Heart right ventricle (tissue), 16 donors: ENCODE measurements at regions of chr2 and their contacts with region 1.

Region 1: DNA sequence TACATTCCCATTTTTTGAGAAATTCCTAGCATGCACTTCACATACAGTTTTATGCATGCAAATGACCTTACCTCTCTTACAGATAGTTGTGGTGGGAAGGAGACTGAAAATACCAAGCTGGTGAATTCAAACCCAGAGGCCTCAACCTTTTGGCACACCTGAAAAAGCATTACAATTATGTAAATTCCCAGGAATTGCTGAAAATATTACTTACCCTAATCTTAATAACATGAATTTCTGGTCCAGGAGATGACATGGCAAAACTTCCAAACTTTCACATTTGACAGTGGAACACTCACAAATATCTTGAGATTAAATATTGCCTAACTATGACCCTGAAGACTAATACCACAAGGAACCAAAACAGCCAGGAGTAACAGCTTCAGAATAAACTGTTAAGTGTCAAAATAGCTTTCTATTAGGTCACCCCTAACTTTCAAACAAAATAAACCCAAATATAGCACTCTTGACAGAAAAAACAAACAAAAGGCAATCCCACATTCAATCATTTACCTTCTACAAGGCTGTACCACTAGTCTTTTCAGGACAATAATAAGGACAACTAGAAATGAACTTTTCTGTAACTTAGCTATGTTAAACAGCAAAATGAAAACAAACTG is 10.9 kb upstream of the PEX13 start:
- DNase-seq: no peak
- ATAC-seq: no peak
- H3K4me3 ChIP-seq: no peak overlapping the region
- H3K27ac ChIP-seq: no peak overlapping the region
- H3K4me1 ChIP-seq: peaks cover 0 to 4% (median 0%) of the 10 kb centered on the region in 9 donors
- H3K27me3 ChIP-seq: no peaks in the 10 kb centered on the region
- CTCF ChIP-seq: no peak

Region 2: DNA sequence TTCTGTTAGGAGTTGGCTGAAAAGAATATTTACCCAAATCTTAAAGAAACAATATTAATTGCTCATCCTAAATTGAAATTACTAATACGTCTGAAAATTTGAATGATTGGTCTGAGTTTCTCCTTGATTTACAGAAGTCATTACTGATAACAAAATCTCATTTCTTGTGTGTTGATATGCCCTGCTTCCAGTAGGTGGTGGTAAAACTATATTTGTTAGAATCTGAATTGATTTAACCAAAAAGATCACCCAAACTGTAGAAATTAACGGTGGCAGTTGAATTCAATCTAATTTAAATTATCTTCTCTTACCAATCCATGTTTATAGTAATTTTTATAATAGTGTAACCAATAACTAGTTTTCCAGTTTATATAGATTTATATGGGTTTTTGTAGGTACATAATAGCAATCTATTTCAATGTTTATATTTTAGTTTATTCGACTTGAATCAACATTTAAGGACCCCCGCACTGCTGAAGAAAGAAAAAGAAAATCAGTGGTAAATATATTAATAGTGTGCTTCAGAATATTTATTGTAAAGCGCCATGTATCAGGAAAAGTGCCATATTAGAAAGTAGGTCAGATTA is 212.2 kb before region 1 on chr2:
- intact Hi-C with region 1: loop called in 3 of 10 experiments (anchors 5 to 10 kb)
- DNase-seq: no peak
- ATAC-seq: no peak
- H3K4me3 ChIP-seq: no peak overlapping the region
- H3K27ac ChIP-seq: peak overlapping the region in 1 of 10 donors; percentile 87
- H3K4me1 ChIP-seq: peaks cover 0 to 24% (median 0%) of the 10 kb centered on the region in 9 donors
- H3K27me3 ChIP-seq: no peaks in the 10 kb centered on the region
- CTCF ChIP-seq: peak in 7 of 9 donors; percentile 34 to 63 (median 53)

Region 3: GRCh38 chr2:61210331-61210981 is 203.9 kb after region 1 on chr2:
- intact Hi-C with region 1: no loop called
- DNase-seq: no peak
- ATAC-seq: peak in 7 of 8 donors; percentile 20 to 77 (median 47)
- H3K4me3 ChIP-seq: no peak overlapping the region
- H3K27ac ChIP-seq: peak overlapping the region in 2 of 10 donors; percentile 32
- H3K4me1 ChIP-seq: peaks cover 0 to 12% (median 0%) of the 10 kb centered on the region in 9 donors
- H3K27me3 ChIP-seq: no peaks in the 10 kb centered on the region
- CTCF ChIP-seq: no peak